GM12878 (cell line): ENCODE measurements at regions of chr21 and their contacts with region 1.

Region 1: DNA sequence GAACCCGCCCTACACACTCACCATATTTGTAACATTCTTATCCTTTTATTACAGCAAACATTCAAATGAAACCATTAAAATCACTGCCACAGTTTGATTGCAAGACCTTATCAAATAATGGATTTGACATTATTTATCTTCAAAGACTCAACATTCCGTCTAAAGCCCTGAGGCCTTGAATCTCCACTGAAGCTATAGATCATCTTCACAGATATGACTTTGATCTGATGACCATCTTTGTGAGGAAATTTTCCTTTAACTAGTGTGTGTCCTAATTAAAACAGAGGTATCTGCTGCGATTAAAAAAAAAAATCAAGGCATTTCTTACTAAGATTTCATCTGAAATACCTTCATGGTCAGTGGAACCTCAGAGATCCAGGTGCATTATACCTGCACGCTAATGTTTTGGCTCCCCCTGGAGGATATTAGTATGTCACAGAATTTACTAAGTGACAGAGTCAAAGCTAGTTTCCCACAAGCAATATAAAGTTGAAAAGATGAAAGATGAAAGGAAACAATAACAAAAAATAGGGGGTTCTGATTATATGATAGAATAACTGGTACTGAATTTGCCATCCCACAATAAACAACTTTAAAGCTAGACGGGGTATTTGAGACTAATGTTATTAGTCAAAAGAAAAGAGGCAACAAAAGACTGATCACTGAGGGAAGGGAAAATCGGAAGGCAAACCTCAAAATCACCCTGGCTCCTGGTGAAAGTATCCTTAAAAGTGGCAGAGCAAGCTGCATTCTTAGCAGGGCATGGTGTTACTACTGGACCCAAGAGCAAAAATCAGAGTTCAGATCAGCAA is 923.4 kb downstream of the NCAM2 start:
- DNase-seq: no peak
- ATAC-seq: no peak
- H3K4me3 ChIP-seq: no peak overlapping the region
- H3K27ac ChIP-seq: no peak overlapping the region
- H3K4me1 ChIP-seq: no peaks in the 10 kb centered on the region
- H3K27me3 ChIP-seq: no peaks in the 10 kb centered on the region
- CTCF ChIP-seq: peak in 2 of 3 experiments; percentile 15 to 30; a peak in 1 of 6 replicates
- EP300 ChIP-seq: no peak
- POLR2A ChIP-seq: no peak
- RAD21 ChIP-seq: peak; percentile 42

Region 2: GRCh38 chr21:21163904-21164303 is 757.7 kb before region 1 on chr21:
- CTCF ChIA-PET with region 1: no interaction called
- POLR2A ChIA-PET with region 1: no interaction called
- RAD21 ChIA-PET with region 1: no interaction called
- SMC1A ChIA-PET with region 1: no interaction called
- in situ Hi-C with region 1: no loop called
- intact Hi-C with region 1: loop called (anchors 5 kb)
- DNase-seq: no peak
- ATAC-seq: peak; percentile 44; the same call in 2 of the 3 replicates
- H3K4me3 ChIP-seq: no peak overlapping the region
- H3K27ac ChIP-seq: no peak overlapping the region
- H3K4me1 ChIP-seq: no peaks in the 10 kb centered on the region
- H3K27me3 ChIP-seq: no peaks in the 10 kb centered on the region
- CTCF ChIP-seq: peak; percentile 15 to 46 (median 35); a peak in 5 of 6 replicates
- EP300 ChIP-seq: no peak
- POLR2A ChIP-seq: no peak
- RAD21 ChIP-seq: peak; percentile 49